ENCODE measurements at regions of chr7 and their contacts with region 1.

Region 1: GRCh38 chr7:124630395-124630794 is 135.2 kb downstream of the GPR37 start:
- DNase-seq: no peak
- ATAC-seq: no peak

Region 2: DNA sequence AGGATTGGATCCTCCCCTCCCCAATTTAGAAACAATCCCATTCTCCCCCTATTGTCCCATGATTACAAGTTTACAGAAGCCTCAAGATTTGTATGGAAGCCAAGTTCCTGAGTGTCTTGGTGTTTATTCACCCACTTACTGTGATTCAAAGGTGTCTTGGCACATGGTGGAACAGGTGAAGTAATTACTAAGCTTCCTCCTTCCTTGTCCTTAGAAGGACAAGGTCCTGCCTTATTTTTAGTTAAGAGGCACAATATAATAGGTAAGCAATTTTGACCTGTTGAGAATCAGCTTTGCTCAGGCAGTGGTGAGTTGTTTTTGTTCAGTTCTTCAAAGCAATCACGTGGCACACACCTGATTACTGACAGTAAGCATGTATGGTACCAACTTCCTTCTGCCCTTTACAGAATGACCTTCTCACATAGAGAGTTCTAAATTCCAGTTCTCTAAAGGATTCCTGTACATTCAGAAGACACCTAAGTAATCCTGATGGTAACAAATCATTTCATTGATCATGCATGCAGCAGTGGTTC is 1369.9 kb before region 1 on chr7:
- intact Hi-C with region 1: loop called (anchors 10 kb)
- DNase-seq: no peak
- ATAC-seq: no peak

Region 3: DNA sequence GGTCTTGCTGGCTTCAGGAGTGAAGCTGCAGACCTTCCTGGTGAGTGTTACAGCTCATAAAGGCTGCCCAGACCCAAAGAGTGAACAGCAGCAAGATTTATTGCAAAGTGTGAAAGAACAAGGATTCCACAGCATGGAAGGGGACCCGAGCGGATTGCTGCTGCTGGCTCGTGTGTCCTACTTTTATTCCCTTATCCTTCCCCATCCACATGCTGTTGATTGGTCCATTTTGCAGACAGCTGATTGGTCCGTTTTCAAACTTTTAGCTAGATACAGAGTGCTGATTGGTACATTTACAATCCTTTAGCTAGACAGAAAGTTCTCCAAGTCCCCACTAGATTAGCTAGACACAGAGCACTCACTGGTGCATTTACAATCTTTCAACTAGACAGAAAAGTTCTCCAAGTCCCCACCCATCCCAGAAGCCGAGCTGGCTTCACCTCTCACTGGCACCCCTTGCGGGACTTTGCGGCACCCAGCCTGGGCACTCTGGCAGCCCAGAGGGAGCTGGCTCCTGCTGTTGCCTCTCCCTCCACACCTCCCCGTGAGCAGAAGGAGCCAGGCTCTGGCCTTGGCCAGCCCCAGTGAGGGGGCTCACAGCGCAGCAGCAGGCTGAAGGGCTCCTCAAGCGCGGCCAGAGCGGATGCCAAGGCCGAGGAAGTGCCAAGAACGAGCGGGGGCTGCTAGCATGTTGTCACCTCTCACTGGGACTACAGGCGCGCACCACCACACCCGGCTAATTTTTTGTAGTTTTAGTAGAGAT is 668.8 kb after region 1 on chr7:
- intact Hi-C with region 1: no loop called
- DNase-seq: no peak
- ATAC-seq: no peak